Mammary epithelial cell (primary cell): ENCODE measurements at regions of chr1 and their contacts with region 1.

Region 1: GRCh38 chr1:243623841-243624240 is 226.2 kb downstream of the AKT3 start:
- DNase-seq: peak; percentile 63
- H3K4me3 ChIP-seq: no peak overlapping the region
- H3K27ac ChIP-seq: no peak overlapping the region
- H3K4me1 ChIP-seq: no peaks in the 10 kb centered on the region
- H3K27me3 ChIP-seq: no peaks in the 10 kb centered on the region
- CTCF ChIP-seq: no peak

Region 2: GRCh38 chr1:243559575-243560162 is 64.2 kb before region 1 on chr1:
- CTCF ChIA-PET with region 1: no interaction called
- dilution Hi-C with region 1: no loop called
- in situ Hi-C with region 1: no loop called
- intact Hi-C with region 1: loop called (anchors 10 kb)
- DNase-seq: no peak
- H3K4me3 ChIP-seq: no peak overlapping the region
- H3K27ac ChIP-seq: no peak overlapping the region
- H3K4me1 ChIP-seq: no peaks in the 10 kb centered on the region
- H3K27me3 ChIP-seq: no peaks in the 10 kb centered on the region
- CTCF ChIP-seq: no peak

Region 3: GRCh38 chr1:243642936-243643335 is 19.1 kb after region 1 on chr1:
- CTCF ChIA-PET with region 1: no interaction called
- dilution Hi-C with region 1: no loop called
- in situ Hi-C with region 1: no loop called
- intact Hi-C with region 1: no loop called
- DNase-seq: no peak
- H3K4me3 ChIP-seq: no peak overlapping the region
- H3K27ac ChIP-seq: no peak overlapping the region
- H3K4me1 ChIP-seq: no peaks in the 10 kb centered on the region
- H3K27me3 ChIP-seq: no peaks in the 10 kb centered on the region
- CTCF ChIP-seq: no peak